CD4-positive, alpha-beta T cell (primary cell): ENCODE measurements at regions of chr14 and their contacts with region 1.

Region 1: DNA sequence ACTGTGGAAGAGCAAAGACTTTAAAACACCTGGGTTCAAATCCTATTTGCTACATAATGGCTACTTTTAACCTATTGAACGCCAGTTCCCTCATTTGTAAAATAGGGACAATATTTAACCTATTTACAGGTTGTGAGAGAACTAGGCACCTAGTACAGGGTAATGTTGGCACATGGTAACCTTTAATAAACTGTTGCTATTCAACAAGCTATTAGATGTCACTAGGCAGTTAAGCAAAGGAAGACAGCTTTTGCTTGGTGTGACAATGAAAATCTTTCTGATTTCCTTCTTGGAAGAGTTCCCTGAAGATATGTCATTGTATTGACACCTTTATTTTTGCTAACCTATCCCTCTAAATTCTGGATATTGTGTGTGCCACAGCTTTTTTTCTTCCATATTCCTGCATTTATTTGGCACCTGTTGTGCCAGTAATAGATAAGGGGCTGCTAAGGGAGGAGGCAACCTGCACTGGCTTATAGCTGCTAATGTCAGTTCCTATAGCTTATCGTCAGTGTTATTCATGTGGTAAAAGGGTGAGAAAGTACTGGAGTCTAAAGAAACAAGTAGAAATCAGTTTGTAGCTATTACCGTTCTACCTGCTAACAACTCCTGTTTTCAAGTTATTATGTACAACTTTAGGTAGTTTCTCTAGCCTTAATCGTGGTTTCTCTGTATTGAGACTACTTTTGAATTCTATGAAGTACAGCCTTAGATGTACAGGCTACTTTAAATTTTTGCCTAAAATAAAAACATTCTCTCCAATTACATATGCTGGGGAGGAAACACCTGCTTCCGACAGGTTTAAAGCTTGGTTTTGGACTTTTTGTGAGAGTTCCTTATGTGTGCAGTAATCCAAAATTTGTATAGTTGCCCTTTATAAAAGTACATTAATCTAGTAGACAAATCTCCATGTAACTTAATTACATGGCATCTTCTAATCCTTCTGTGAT is 24.3 kb downstream of the HIF1A start:
- DNase-seq: peak in 3 of 14 experiments; percentile 49 to 57 (median 52)
- ATAC-seq: peak; percentile 77
- H3K4me3 ChIP-seq: no peak overlapping the region
- H3K4me3 Mint-ChIP-seq: peak overlapping the region; percentile 49
- H3K27ac ChIP-seq: peak overlapping the region; percentile 18 to 46
- H3K27ac Mint-ChIP-seq: peak overlapping the region; percentile 73
- H3K4me1 ChIP-seq: peaks cover 26% of the 10 kb centered on the region
- H3K4me1 Mint-ChIP-seq: peaks cover 80% of the 10 kb centered on the region
- H3K27me3 ChIP-seq: no peaks in the 10 kb centered on the region
- H3K27me3 Mint-ChIP-seq: no peaks in the 10 kb centered on the region
- CTCF ChIP-seq: no peak

Region 2: DNA sequence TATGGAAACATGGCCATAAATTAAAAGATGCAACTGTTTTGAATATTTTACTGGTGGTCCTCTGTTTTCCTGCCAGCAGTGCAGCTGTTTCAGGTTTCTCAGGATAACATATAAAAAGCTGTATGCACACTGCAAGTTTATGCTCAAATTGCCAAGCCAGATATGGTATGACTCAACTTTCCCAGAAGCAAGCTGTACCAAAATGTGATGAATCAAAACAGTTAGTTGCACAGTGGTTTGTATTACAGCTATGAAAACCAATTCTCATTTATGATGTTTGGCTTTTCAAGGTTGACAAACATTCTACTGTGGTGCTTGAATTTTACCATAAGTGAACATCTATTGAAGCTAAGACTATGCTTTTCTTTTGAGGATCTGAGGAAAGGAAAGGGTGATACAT is 754.2 kb before region 1 on chr14:
- CTCF ChIA-PET with region 1: no interaction called
- POLR2A ChIA-PET with region 1: no interaction called
- intact Hi-C with region 1: no loop called
- DNase-seq: no peak
- ATAC-seq: no peak
- H3K4me3 ChIP-seq: no peak overlapping the region
- H3K4me3 Mint-ChIP-seq: no peak overlapping the region
- H3K27ac ChIP-seq: no peak overlapping the region
- H3K27ac Mint-ChIP-seq: no peak overlapping the region
- H3K4me1 ChIP-seq: no peaks in the 10 kb centered on the region
- H3K4me1 Mint-ChIP-seq: no peaks in the 10 kb centered on the region
- H3K27me3 ChIP-seq: no peaks in the 10 kb centered on the region
- H3K27me3 Mint-ChIP-seq: no peaks in the 10 kb centered on the region
- CTCF ChIP-seq: no peak

Region 3: DNA sequence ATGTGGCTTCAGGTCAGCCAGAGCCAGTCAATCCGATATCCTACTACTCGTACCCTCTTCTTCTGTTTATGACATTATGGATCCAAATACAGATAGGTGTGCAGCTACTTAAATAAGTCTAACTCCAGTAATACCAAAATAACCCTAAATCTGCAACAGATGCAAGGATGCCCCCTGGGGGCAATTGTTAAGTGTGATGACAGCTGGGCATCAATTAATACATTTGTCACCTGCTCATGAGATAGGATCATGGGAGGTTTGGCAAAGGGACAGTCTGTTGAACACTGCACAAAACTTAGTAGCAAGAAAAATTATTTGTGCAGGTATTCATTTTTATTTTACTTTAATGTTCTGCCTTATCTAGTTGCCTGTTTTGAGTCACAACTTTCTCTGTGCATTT is 655.4 kb before region 1 on chr14:
- CTCF ChIA-PET with region 1: no interaction called
- POLR2A ChIA-PET with region 1: no interaction called
- intact Hi-C with region 1: no loop called
- DNase-seq: no peak
- ATAC-seq: no peak
- H3K4me3 ChIP-seq: no peak overlapping the region
- H3K4me3 Mint-ChIP-seq: no peak overlapping the region
- H3K27ac ChIP-seq: no peak overlapping the region
- H3K27ac Mint-ChIP-seq: no peak overlapping the region
- H3K4me1 ChIP-seq: no peaks in the 10 kb centered on the region
- H3K4me1 Mint-ChIP-seq: no peaks in the 10 kb centered on the region
- H3K27me3 ChIP-seq: no peaks in the 10 kb centered on the region
- H3K27me3 Mint-ChIP-seq: no peaks in the 10 kb centered on the region
- CTCF ChIP-seq: no peak

Region 4: GRCh38 chr14:61568572-61569131 is 151.0 kb before region 1 on chr14:
- CTCF ChIA-PET with region 1: no interaction called
- POLR2A ChIA-PET with region 1: interaction called, 4 read pairs
- intact Hi-C with region 1: loop called in 1 of 2 experiments (anchors 5 kb)
- DNase-seq: peak; percentile 24 to 79 (median 54)
- ATAC-seq: peak; percentile 83
- H3K4me3 ChIP-seq: peak overlapping the region; percentile 45
- H3K4me3 Mint-ChIP-seq: peak overlapping the region; percentile 76
- H3K27ac ChIP-seq: no peak overlapping the region
- H3K27ac Mint-ChIP-seq: peak overlapping the region; percentile 83
- H3K4me1 ChIP-seq: peaks cover 39% of the 10 kb centered on the region
- H3K4me1 Mint-ChIP-seq: peaks cover 59% of the 10 kb centered on the region
- H3K27me3 ChIP-seq: no peaks in the 10 kb centered on the region
- H3K27me3 Mint-ChIP-seq: no peaks in the 10 kb centered on the region
- CTCF ChIP-seq: no peak

Region 5: DNA sequence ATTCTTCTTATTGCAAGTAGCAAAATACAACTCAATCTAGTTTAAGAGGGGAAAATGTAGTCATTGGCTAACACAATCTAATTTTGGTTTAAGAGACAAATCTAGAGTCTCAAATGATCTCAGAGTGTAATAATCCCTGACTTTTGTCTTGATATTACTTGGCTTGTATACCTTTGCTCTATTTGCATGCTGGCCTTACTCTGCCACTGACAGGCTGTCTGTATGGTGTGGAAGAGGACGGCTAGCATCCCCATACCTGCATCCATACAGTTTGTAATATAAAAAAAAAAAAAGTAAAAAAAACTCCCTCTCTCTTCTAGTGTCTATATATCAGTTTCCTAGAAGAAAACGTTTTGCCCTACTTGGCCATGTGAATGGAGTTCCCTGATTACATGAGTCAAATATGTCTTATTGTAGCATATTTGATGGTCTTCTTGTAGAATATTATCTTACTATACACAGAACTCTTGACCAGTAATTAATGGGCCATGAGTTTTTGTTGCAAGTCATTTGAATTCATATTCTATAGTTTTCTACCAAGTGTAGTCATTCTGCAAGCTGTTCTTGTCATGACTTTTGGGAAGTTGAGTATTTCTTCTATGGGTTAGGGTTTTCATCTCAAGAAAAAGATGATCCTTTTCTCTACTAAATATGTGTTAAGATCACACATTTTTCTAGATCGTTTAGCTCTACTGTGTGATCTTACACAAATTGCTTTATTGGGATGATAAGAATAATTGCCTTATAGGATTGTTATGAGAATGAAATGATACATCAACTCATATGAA is 16.1 kb before region 1 on chr14:
- CTCF ChIA-PET with region 1: interaction called, 3 read pairs
- POLR2A ChIA-PET with region 1: interaction called, 10 read pairs
- intact Hi-C with region 1: loop called (anchors 2 kb)
- DNase-seq: no peak
- ATAC-seq: peak; percentile 24
- H3K4me3 ChIP-seq: no peak overlapping the region
- H3K4me3 Mint-ChIP-seq: peak overlapping the region; percentile 35
- H3K27ac ChIP-seq: no peak overlapping the region
- H3K27ac Mint-ChIP-seq: peak overlapping the region; percentile 11
- H3K4me1 ChIP-seq: peaks cover 8% of the 10 kb centered on the region
- H3K4me1 Mint-ChIP-seq: peaks cover 85% of the 10 kb centered on the region
- H3K27me3 ChIP-seq: no peaks in the 10 kb centered on the region
- H3K27me3 Mint-ChIP-seq: no peaks in the 10 kb centered on the region
- CTCF ChIP-seq: no peak

Region 6: GRCh38 chr14:61774861-61775260 is 55.2 kb after region 1 on chr14:
- CTCF ChIA-PET with region 1: no interaction called
- POLR2A ChIA-PET with region 1: no interaction called
- intact Hi-C with region 1: no loop called
- DNase-seq: no peak
- ATAC-seq: no peak
- H3K4me3 ChIP-seq: no peak overlapping the region
- H3K4me3 Mint-ChIP-seq: no peak overlapping the region
- H3K27ac ChIP-seq: no peak overlapping the region
- H3K27ac Mint-ChIP-seq: no peak overlapping the region
- H3K4me1 ChIP-seq: peaks cover 4% of the 10 kb centered on the region
- H3K4me1 Mint-ChIP-seq: peaks cover 22% of the 10 kb centered on the region
- H3K27me3 ChIP-seq: no peaks in the 10 kb centered on the region
- H3K27me3 Mint-ChIP-seq: no peaks in the 10 kb centered on the region
- CTCF ChIP-seq: no peak